ENCODE measurements at regions of chr13 and their contacts with region 1.

Region 1: DNA sequence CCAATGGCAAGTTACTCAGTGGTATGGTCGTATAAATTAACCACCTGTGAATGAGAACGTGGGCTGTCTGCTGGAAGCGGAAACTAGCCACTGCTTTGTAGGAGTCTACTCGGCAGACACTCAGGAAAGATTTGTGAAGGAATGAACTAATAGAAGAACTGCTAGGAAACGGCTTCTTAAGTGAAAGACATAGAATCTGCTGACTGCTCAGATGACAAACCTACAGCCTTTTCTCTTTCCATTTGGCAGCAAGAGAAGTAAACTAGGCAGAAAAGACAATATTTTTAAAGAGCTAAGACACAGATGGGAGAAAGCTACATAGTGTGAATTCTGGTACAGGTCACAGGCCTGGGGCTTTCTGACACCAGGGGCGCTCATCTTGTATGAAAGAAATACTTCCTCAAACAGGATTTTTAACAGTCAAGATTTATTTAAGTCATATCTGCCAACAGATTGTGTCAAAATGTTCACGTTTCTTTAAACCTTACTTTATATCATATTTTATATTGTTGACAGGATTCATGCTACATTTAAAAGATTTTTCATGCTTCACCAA is 78.4 kb downstream of the MIPEP start:
- DNase-seq: peak; percentile 36
- CTCF ChIP-seq: peak; percentile 41

Region 2: DNA sequence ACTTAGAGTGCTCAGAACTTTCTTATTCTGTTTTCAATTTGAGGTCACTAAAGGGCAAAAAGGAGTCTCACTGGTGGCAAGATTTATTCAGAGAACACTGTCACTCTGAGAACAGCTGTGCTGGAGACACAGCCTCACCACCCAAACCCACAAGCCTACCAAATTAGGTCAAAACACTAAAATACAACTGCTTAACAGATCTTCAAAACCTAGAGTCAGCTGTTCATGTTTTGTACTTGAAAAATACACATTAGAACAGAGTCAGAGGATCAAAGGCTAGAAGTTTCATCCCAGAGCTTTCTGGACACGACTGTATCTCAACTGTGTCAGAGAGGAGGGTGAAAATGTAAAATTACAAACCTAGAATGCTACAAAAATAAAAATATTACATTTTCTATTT is 10.8 kb before region 1 on chr13:
- CTCF ChIA-PET with region 1: interaction called, 11 read pairs
- POLR2A ChIA-PET with region 1: interaction called, 7 read pairs
- DNase-seq: peak; percentile 42
- CTCF ChIP-seq: no peak

Region 3: GRCh38 chr13:23824371-23824770 is 13.6 kb after region 1 on chr13:
- CTCF ChIA-PET with region 1: interaction called, 11 read pairs
- POLR2A ChIA-PET with region 1: no interaction called
- DNase-seq: no peak
- CTCF ChIP-seq: no peak

Region 4: DNA sequence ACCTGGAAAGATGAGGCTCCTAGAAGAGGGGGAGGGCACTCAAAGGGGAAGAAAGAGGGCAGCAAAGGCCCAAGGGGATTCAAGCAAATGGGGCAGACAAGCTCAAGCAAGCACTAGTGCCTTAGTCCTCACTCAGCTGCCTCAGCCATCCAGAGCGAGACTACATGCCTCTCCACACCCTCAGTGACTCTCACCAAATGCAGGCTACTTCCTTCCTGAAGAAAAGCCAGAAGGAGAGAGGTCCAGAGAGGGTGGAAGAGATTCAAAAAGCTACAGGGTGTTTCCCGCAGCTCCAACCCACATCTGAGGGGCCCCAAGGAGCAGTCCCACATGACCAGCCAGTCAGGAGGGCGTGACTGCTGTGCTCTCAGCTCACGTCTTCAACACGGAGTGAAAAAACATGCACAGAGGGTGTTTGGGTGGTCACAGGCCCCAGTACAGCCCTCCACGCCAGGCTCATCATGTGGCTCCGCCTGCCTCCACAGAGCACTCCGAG is 37.9 kb after region 1 on chr13:
- CTCF ChIA-PET with region 1: interaction called, 11 read pairs
- POLR2A ChIA-PET with region 1: no interaction called
- DNase-seq: no peak
- CTCF ChIP-seq: no peak

Region 5: GRCh38 chr13:23921451-23921888 is 110.7 kb after region 1 on chr13:
- CTCF ChIA-PET with region 1: no interaction called
- POLR2A ChIA-PET with region 1: no interaction called
- DNase-seq: no peak
- CTCF ChIP-seq: peak; percentile 52

Measured in GM10248 (cell line).